ENCODE measurements at regions of chr16 and their contacts with region 1.

Region 1: DNA sequence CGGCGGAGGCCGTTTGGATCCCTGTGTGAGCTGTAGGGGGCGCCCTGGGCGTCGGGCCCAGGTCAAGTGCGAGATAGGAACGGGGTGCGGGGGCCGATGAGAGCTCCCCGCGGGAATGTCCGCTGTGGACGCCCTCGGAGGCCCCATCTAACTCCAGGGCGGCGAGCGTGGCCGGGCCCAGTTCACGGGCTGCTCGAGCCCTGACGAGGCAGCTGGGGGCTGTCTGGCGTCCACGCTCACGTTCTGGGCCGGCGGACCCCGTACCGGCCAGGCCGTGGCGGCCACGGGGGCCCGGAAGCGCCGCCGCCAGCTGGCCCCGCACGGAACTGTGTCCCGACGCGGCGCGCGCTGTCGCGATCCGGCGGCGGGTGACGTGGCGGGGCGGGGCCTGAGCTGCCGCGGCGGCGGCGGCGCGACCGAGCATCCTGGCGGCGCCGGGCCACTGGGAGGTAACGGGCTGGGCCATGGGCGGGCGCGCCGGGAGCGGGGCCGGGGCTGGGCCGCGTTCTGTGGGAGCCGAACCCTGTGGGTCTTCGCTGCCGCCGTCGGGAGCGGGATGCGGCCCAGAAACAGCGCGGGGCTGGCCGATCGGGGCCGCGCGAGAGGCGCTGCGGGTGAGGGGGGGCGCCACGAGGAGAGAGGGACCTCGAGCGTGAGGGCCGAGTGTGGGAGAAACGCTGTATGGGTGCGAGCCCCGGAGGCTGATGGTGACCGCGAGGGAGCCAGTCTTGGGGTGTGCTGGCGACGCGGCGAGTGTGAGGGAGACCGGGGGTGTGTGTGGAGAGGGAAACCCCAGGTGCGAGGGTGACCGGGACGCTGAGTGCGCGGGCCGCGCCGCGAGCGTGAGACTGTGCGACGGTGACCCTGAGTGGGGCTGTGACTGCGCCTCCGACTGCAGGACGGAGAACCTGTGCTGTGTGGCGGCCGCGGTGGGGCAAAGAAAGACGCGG is at the start of gene SLC7A6:
- DNase-seq: peak; percentile 69
- ATAC-seq: peak; percentile 81
- H3K4me3 ChIP-seq: peak within 1 kb of the TSS; percentile 84
- H3K27ac ChIP-seq: peak within 1 kb of the TSS; percentile 98
- H3K4me1 ChIP-seq: peaks cover 10% of the 10 kb centered on the region
- H3K27me3 ChIP-seq: no peaks in the 10 kb centered on the region
- CTCF ChIP-seq: peak; percentile 79
- POLR2A ChIP-seq: peak; percentile 77
- RAD21 ChIP-seq: peak; percentile 33
- total RNA-seq, gene SLC7A6: 25.0 and 29.4 TPM in 2 replicates

Region 2: DNA sequence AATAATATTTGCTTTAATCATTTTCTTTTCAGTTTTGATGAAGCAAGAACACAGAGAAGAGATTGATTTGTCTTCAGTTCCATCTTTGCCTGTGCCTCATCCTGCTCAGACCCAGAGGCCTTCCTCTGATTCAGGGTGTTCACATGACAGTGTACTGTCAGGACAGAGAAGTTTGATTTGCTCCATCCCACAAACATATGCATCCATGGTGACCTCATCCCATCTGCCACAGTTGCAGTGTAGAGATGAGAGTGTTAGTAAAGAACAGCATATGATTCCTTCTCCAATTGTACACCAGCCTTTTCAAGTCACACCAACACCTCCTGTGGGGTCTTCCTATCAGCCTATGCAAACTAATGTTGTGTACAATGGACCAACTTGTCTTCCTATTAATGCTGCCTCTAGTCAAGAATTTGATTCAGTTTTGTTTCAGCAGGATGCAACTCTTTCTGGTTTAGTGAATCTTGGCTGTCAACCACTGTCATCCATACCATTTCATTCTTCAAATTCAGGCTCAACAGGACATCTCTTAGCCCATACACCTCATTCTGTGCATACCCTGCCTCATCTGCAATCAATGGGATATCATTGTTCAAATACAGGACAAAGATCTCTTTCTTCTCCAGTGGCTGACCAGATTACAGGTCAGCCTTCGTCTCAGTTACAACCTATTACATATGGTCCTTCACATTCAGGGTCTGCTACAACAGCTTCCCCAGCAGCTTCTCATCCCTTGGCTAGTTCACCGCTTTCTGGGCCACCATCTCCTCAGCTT is 73.5 kb before region 1 on chr16:
- CTCF ChIA-PET with region 1: no interaction called
- POLR2A ChIA-PET with region 1: no interaction called
- dilution Hi-C with region 1: no loop called
- in situ Hi-C with region 1: no loop called
- intact Hi-C with region 1: no loop called
- DNase-seq: peak; percentile 64
- ATAC-seq: 0 out of 2 replicates have a peak, but pooled peaks have one; percentile 40
- H3K4me3 ChIP-seq: no peak overlapping the region
- H3K27ac ChIP-seq: no peak overlapping the region
- H3K4me1 ChIP-seq: no peaks in the 10 kb centered on the region
- H3K27me3 ChIP-seq: no peaks in the 10 kb centered on the region
- CTCF ChIP-seq: no peak
- POLR2A ChIP-seq: no peak
- RAD21 ChIP-seq: no peak

Region 3: DNA sequence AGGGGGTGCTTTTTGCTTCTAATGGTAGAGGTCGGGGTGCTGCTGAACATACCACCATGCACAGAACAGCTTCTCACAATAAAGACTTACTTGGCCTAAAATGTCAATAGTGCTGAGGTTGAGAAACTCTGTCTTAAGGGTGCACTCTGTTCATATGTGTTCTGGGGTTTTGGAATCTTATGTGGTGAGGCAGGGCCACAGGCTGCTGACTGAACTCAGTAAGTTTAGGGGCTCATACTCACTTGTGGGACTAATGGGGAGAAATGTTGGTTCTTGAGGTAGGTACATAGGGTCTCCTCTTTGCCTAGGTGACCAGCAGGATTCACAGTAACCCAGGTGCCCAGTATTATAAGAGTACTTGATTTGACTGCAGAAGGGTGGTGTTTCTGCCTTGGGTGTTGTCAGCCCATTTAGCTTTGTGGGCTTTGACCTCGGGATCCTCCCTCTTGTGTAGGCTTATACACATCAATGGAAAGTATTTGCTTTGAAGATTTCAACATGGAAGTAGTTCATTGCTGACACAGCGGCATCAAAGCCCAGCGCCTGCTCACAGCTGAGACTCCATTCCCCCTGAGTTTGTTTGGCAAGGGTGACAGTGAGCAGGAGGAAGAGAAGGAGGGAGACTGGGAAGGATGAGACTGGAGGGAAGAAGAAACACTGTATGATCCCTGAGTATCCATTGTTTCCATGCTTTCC is 17.1 kb after region 1 on chr16:
- CTCF ChIA-PET with region 1: interaction called, 4 read pairs
- POLR2A ChIA-PET with region 1: interaction called, 4 read pairs
- dilution Hi-C with region 1: no loop called
- in situ Hi-C with region 1: no loop called
- intact Hi-C with region 1: loop called (anchors 2 kb)
- DNase-seq: no peak
- ATAC-seq: no peak
- H3K4me3 ChIP-seq: no peak overlapping the region
- H3K27ac ChIP-seq: no peak overlapping the region
- H3K4me1 ChIP-seq: no peaks in the 10 kb centered on the region; the same call in 1 of the 2 replicates
- H3K27me3 ChIP-seq: no peaks in the 10 kb centered on the region
- CTCF ChIP-seq: no peak
- POLR2A ChIP-seq: no peak
- RAD21 ChIP-seq: no peak

Region 4: GRCh38 chr16:68289621-68290329 is 25.4 kb after region 1 on chr16:
- CTCF ChIA-PET with region 1: interaction called, 10 read pairs
- POLR2A ChIA-PET with region 1: interaction called, 3 read pairs
- dilution Hi-C with region 1: no loop called
- in situ Hi-C with region 1: no loop called
- intact Hi-C with region 1: no loop called
- DNase-seq: no peak
- ATAC-seq: no peak
- H3K4me3 ChIP-seq: no peak overlapping the region
- H3K27ac ChIP-seq: no peak overlapping the region
- H3K4me1 ChIP-seq: peaks cover 11% of the 10 kb centered on the region
- H3K27me3 ChIP-seq: no peaks in the 10 kb centered on the region
- CTCF ChIP-seq: no peak
- POLR2A ChIP-seq: no peak
- RAD21 ChIP-seq: no peak

Region 5: DNA sequence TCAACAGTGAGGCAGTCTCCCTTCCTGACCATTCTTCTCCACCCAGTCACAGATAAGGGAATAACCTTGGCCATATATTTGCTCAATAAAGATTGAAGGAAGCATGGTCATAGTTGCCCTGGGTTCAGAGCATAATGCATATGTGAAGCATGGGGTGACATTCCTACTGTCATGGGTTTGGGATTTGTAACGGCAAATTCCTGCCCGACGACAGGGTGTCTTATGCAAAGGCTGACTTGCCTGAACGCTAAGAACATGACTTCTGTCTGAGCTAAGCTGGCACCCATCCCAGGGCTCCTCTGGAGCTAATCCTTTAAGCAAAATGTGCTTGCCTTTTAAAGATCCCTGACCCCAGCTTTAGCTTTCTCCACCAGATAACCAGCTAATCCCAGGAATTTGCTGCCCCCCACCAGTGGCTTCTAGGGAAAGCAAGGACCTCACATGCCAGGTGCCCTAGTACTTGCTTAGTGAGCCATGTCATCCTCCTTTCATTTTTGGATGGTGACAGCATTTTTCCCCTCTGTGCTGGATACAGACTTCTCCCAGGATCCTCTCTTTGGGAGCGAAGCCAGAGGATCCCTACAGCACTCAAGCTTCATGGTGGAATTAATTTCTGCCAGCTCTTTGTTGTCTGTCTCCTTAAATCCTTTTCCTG is 34.6 kb after region 1 on chr16:
- CTCF ChIA-PET with region 1: interaction called, 10 read pairs
- POLR2A ChIA-PET with region 1: interaction called, 4 read pairs
- dilution Hi-C with region 1: no loop called
- in situ Hi-C with region 1: no loop called
- intact Hi-C with region 1: loop called (anchors 5 kb)
- DNase-seq: peak; percentile 77
- ATAC-seq: peak; percentile 64
- H3K4me3 ChIP-seq: no peak overlapping the region
- H3K27ac ChIP-seq: peak overlapping the region; percentile 16; the same call in 1 of the 2 replicates
- H3K4me1 ChIP-seq: peaks cover 7% of the 10 kb centered on the region; the same call in 1 of the 2 replicates
- H3K27me3 ChIP-seq: no peaks in the 10 kb centered on the region
- CTCF ChIP-seq: no peak
- POLR2A ChIP-seq: no peak
- RAD21 ChIP-seq: no peak

Region 6: GRCh38 chr16:68310761-68311511 is 46.5 kb after region 1 on chr16 and contains the starts of genes PRMT7 and SLC7A6OS:
- CTCF ChIA-PET with region 1: interaction called, 6 read pairs
- POLR2A ChIA-PET with region 1: interaction called, 3 read pairs
- dilution Hi-C with region 1: no loop called
- in situ Hi-C with region 1: no loop called
- intact Hi-C with region 1: loop called (anchors 5 kb)
- DNase-seq: peak; percentile 84
- ATAC-seq: peak; percentile 100
- H3K4me3 ChIP-seq: peak within 1 kb of the TSS; percentile 97
- H3K27ac ChIP-seq: peak within 1 kb of the TSS; percentile 89
- H3K4me1 ChIP-seq: peaks cover 9% of the 10 kb centered on the region
- H3K27me3 ChIP-seq: no peaks in the 10 kb centered on the region
- CTCF ChIP-seq: 0 out of 2 replicates have a peak, but pooled peaks have one; percentile 5
- POLR2A ChIP-seq: peak; percentile 85
- RAD21 ChIP-seq: no peak
- total RNA-seq, gene PRMT7: 65.5 and 68.6 TPM in 2 replicates
- total RNA-seq, gene SLC7A6OS: 8.4 and 10.3 TPM in 2 replicates

Region 7: DNA sequence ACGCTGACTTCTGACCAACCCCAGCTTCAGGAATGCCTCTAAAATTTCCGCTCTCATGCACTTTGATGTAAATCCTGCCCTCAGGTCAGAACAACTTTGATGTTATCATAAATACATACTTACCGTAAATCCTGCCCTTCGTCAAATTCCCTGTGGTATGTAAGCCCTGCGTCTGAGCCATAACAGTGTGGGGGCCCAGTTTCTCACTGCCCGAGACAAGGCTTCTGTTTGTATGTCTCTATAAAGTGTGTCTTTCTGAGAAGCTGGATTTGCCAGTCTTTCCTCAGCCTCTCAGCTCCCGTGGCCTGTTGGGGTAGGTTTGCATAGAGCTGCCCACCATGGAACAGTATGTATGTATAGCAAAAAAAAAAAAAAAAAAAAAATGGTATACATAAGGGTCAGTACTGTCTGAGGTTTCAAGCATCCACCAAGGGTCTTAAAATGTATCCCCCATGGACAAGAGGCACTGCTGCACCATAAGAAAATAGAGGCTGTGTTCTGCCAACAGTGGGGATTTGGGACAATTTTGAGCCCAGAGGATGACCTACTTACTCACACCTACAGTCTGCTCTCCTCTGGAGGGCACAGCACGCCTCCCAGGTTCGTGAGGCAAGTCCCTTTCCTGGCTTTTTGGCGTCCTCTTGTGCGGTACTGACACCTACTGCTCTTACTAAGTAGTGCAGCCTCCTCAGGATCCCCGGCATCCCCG is 63.9 kb after region 1 on chr16:
- CTCF ChIA-PET with region 1: interaction called, 10 read pairs
- POLR2A ChIA-PET with region 1: interaction called, 3 read pairs
- dilution Hi-C with region 1: no loop called
- in situ Hi-C with region 1: loop called (anchors 5 kb)
- intact Hi-C with region 1: loop called (anchors 1 kb)
- DNase-seq: peak; percentile 83
- ATAC-seq: peak; percentile 86
- H3K4me3 ChIP-seq: no peak overlapping the region
- H3K27ac ChIP-seq: no peak overlapping the region
- H3K4me1 ChIP-seq: peaks cover 10% of the 10 kb centered on the region
- H3K27me3 ChIP-seq: no peaks in the 10 kb centered on the region
- CTCF ChIP-seq: peak; percentile 94
- POLR2A ChIP-seq: no peak; the same call in 1 of the 2 replicates
- RAD21 ChIP-seq: peak; percentile 92

Region 8: GRCh38 chr16:68478526-68479250 is 214.3 kb after region 1 on chr16:
- CTCF ChIA-PET with region 1: no interaction called
- POLR2A ChIA-PET with region 1: no interaction called
- dilution Hi-C with region 1: no loop called
- in situ Hi-C with region 1: no loop called
- intact Hi-C with region 1: no loop called
- DNase-seq: no peak
- ATAC-seq: no peak
- H3K4me3 ChIP-seq: no peak overlapping the region
- H3K27ac ChIP-seq: no peak overlapping the region
- H3K4me1 ChIP-seq: no peaks in the 10 kb centered on the region
- H3K27me3 ChIP-seq: peaks cover 9% of the 10 kb centered on the region; the same call in 1 of the 2 replicates
- CTCF ChIP-seq: no peak
- POLR2A ChIP-seq: no peak
- RAD21 ChIP-seq: no peak

Region 9: DNA sequence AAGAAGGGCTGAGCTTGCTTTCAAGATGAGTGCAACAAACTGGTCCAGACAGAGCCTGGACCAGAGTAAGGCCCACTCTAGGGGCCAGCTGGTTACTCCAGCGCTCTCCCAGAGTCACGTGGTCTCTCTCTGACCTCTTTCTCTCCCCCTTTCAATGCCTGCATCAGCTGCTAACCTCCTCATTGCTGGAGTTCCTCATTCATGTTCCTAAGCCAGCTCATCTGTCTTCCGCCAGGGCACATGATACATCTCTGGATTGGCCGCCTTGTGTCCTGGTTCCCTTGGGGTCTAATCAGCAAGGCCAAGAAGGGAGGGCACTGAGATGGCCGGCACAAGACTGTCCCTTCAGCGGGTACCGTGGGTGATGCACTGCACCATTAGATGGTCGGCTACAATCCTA is 247.8 kb after region 1 on chr16:
- CTCF ChIA-PET with region 1: no interaction called
- POLR2A ChIA-PET with region 1: no interaction called
- dilution Hi-C with region 1: no loop called
- in situ Hi-C with region 1: no loop called
- intact Hi-C with region 1: loop called (anchors 5 kb)
- DNase-seq: no peak
- ATAC-seq: no peak
- H3K4me3 ChIP-seq: no peak overlapping the region
- H3K27ac ChIP-seq: no peak overlapping the region
- H3K4me1 ChIP-seq: no peaks in the 10 kb centered on the region
- H3K27me3 ChIP-seq: peaks cover 20% of the 10 kb centered on the region
- CTCF ChIP-seq: no peak
- POLR2A ChIP-seq: no peak
- RAD21 ChIP-seq: no peak